ENCODE measurements at regions of chr1 and their contacts with region 1.

Region 1: GRCh38 chr1:2233997-2234761 is 6.1 kb downstream of the SKI start:
- DNase-seq: peak; percentile 73 to 85
- H3K4me3 ChIP-seq: peak overlapping the region; percentile 47; the same call in 1 of the 2 replicates
- H3K27ac ChIP-seq: peak overlapping the region; percentile 68
- H3K4me1 ChIP-seq: peaks cover 52% of the 10 kb centered on the region
- H3K27me3 ChIP-seq: no peaks in the 10 kb centered on the region
- CTCF ChIP-seq: no peak

Region 2: GRCh38 chr1:2290595-2291510 is 56.7 kb after region 1 on chr1:
- CTCF ChIA-PET with region 1: interaction called, 4 read pairs
- POLR2A ChIA-PET with region 1: interaction called, 6 read pairs
- intact Hi-C with region 1: loop called (anchors 1 kb)
- DNase-seq: peak; percentile 86 to 96
- H3K4me3 ChIP-seq: peak overlapping the region; percentile 50; the same call in 1 of the 2 replicates
- H3K27ac ChIP-seq: peak overlapping the region; percentile 78
- H3K4me1 ChIP-seq: peaks cover 34% of the 10 kb centered on the region
- H3K27me3 ChIP-seq: no peaks in the 10 kb centered on the region
- CTCF ChIP-seq: no peak

Region 3: DNA sequence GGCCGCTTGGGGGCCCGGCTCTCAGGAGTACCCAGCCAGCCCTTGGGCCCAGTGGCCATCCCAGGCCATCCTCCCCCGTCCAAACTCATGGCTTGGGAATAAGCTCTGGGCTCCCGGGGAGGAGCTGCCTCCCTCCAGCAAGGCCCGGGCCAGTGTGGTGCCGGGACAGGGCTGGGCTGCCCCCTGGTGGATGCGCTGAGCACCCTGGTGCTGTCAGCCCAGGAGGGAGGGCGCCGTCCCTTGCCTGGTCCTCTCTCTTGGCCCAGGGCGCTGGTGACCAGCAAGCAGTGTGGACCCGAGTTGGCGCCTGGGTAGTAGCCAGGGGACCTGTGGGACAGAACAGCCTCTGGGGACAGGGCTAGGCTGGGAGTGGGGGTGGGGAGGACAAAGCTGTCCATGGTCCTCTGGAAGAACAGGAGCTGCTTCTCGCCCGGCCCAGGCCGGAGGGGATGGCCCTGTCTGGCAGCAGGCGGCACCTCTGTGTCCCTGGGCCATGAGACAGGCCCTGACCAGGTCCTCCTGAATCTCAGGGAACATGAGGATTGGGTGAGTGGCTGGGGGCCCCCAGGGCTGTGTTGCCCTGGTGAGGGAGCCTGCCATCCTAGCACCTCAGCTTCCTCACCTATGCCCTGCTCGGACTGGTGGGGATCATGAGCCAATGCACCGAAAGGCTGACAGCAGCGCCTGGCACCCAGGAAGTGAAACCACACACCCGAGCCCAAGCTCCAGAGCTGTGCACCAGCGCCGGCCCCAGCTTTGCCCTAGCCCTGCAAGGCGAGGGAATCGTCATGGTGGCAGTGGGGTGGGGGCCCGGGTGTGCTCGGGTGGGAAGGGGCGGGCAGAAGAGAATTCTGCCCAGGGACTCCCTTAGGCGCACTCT is 147.8 kb after region 1 on chr1:
- CTCF ChIA-PET with region 1: no interaction called
- POLR2A ChIA-PET with region 1: interaction called, 13 read pairs
- intact Hi-C with region 1: no loop called
- DNase-seq: peak; percentile 47 to 72
- H3K4me3 ChIP-seq: no peak overlapping the region
- H3K27ac ChIP-seq: no peak overlapping the region
- H3K4me1 ChIP-seq: no peaks in the 10 kb centered on the region
- H3K27me3 ChIP-seq: no peaks in the 10 kb centered on the region
- CTCF ChIP-seq: peak; percentile 86